HCT116 (cell line): ENCODE measurements at regions of chr11 and their contacts with region 1.

Region 1: DNA sequence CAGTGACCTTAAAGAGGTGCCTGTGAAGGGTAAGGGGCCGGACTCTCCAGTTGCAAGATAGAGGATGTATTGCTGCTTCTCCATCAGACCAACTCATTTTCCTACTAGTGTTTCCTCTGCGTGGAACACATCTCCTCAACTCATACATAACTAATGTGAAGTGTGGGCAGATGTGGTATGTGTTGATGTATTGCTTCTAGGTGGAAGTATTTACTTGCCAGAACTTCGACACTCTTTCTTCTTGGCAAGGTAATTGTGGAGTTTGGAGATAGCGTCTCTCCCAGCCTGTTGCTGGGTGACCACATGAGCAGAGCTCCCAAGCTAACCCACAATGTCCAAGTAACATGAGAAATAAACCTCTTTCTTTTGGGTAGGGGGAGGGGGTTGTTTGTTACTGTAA is 456.9 kb downstream of the DYNC2H1 start:
- DNase-seq: no peak
- ATAC-seq: no peak
- H3K4me3 ChIP-seq: no peak overlapping the region
- H3K27ac ChIP-seq: no peak overlapping the region
- H3K4me1 ChIP-seq: no peaks in the 10 kb centered on the region
- H3K27me3 ChIP-seq: no peaks in the 10 kb centered on the region
- CTCF ChIP-seq: no peak
- POLR2A ChIP-seq: no peak
- RAD21 ChIP-seq: no peak

Region 2: GRCh38 chr11:103547024-103547423 is 19.1 kb before region 1 on chr11:
- CTCF ChIA-PET with region 1: no interaction called
- POLR2A ChIA-PET with region 1: no interaction called
- RAD21 ChIA-PET with region 1: no interaction called
- intact Hi-C with region 1: loop called (anchors 1 kb)
- DNase-seq: no peak
- ATAC-seq: no peak
- H3K4me3 ChIP-seq: no peak overlapping the region
- H3K27ac ChIP-seq: no peak overlapping the region
- H3K4me1 ChIP-seq: no peaks in the 10 kb centered on the region
- H3K27me3 ChIP-seq: no peaks in the 10 kb centered on the region
- CTCF ChIP-seq: no peak
- POLR2A ChIP-seq: no peak
- RAD21 ChIP-seq: no peak